Transverse colon (tissue), 4 donors: ENCODE measurements at regions of chr19 and their contacts with region 1.

Region 1: GRCh38 chr19:46076951-46077816 is 36.4 kb upstream of the IGFL4 start:
- DNase-seq: peak; percentile 57
- H3K4me3 ChIP-seq: peak overlapping the region in 3 of 4 donors; percentile 15 to 43 (median 16)
- H3K27ac ChIP-seq: no peak overlapping the region
- H3K4me1 ChIP-seq: peaks cover 0 to 14% (median 8%) of the 10 kb centered on the region in 4 donors
- H3K27me3 ChIP-seq: peaks cover 62% of the 10 kb centered on the region
- CTCF ChIP-seq: peak; percentile 62 to 85 (median 79)
- EP300 ChIP-seq: no peak
- POLR2A ChIP-seq: no peak

Region 2: DNA sequence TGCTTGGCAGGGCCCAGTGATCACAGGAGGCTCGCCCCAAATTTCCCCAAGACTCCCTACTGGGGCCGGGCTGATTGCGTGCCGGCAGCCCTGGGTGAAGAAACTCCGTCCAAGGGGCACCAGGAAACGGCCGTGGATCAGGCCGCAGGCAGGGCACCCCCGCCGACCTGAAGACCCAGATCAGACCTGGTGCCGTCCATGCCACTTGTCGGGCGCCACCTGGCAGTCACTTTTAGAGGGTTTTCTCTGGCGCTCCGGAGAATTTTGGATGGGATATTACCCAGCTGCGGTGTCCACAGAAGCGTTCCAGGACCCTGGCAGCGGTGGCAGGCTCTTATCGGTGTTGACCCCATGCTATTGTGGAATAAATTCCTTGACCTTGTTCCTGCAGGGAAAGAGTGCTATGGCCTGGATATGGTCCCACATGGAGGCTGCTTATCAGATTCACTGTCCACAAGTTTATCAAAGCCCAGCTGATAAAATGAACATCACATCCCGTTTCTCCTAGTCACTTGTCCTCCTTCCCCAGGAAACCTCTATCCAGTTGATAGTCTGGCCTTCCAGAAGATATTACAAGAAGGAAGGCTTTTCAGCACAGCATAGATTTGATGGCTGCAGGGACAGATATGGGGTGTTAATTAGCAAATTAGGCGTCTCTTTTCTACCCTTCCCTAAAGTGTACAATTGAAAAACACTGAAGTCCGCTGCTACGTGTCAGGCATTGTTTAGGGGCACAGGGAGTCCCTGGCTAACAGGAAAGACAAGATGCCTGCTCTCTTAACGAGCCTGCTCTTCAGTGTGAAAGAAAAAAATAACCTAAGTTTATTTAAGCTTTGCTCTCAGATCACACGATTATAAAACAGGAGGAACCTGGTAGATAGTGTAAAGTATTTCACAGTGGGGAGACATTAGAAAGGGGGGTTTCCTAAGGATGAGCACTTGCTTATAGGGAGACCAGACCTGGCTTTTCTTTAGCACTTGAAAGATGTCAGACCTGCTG is 109.2 kb after region 1 on chr19:
- in situ Hi-C with region 1: loop called in 3 of 4 experiments (anchors 5 to 10 kb)
- intact Hi-C with region 1: no loop called
- DNase-seq: no peak
- H3K4me3 ChIP-seq: no peak overlapping the region
- H3K27ac ChIP-seq: no peak overlapping the region
- H3K4me1 ChIP-seq: no peaks in the 10 kb centered on the region
- H3K27me3 ChIP-seq: peaks cover 31% of the 10 kb centered on the region
- CTCF ChIP-seq: no peak
- EP300 ChIP-seq: no peak
- POLR2A ChIP-seq: no peak